ENCODE measurements at regions of chr7 and their contacts with region 1.

Region 1: GRCh38 chr7:836411-837400 is 4.4 kb downstream of the SUN1 start:
- DNase-seq: no peak
- ATAC-seq: peak; percentile 56
- H3K4me3 Mint-ChIP-seq: no peak overlapping the region
- H3K27ac Mint-ChIP-seq: peak overlapping the region; percentile 82
- H3K4me1 Mint-ChIP-seq: peaks cover 29% of the 10 kb centered on the region
- H3K27me3 Mint-ChIP-seq: no peaks in the 10 kb centered on the region
- CTCF ChIP-seq: no peak

Region 2: DNA sequence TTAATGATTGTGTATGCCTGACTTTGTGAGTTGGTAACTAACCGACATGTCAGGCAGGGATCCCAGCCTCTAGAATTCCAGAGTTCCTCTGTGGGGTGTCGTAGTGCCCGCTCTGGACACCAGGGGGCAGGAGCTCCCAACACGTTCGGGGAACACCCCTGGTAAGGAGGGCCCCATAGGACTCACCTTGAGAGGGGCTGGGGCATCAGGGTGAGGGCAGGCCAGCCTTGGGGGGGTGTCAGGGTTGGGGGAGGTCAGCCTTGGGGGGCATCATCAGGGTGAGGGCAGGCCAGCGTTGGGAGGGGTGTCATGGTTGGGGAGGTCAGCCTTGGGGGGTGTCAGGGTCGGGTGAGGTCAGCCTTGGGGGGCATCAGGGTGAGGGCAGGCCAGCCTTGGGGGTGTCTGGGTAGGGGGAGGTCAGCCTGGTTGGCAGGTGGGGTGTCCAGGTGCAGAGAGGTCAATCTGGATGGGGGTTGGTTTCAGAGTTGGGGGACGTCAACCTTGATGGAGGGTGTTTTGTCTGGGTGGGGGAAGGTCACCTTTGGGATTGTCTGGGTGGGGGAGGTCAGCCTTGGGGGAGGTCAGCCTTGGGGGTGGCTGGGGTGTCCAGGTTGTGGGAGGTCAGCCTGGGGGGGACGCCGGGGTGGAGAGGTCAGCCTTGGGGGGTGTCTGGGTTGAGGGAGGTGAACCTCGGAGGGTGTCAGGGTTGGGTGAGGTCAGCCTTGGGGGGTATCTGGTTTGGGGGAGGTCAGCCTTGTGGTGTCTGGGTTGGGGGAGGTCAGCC is 50.0 kb before region 1 on chr7:
- CTCF ChIA-PET with region 1: interaction called, 17 read pairs
- POLR2A ChIA-PET with region 1: no interaction called
- DNase-seq: peak; percentile 87
- ATAC-seq: peak; percentile 92
- H3K4me3 Mint-ChIP-seq: no peak overlapping the region
- H3K27ac Mint-ChIP-seq: no peak overlapping the region
- H3K4me1 Mint-ChIP-seq: no peaks in the 10 kb centered on the region
- H3K27me3 Mint-ChIP-seq: no peaks in the 10 kb centered on the region; the same call in 1 of the 2 replicates
- CTCF ChIP-seq: peak; percentile 86

Region 3: GRCh38 chr7:822692-823276 is 13.9 kb before region 1 on chr7:
- CTCF ChIA-PET with region 1: interaction called, 15 read pairs
- POLR2A ChIA-PET with region 1: no interaction called
- DNase-seq: peak; percentile 63
- ATAC-seq: peak; percentile 82
- H3K4me3 Mint-ChIP-seq: no peak overlapping the region
- H3K27ac Mint-ChIP-seq: peak overlapping the region; percentile 44
- H3K4me1 Mint-ChIP-seq: peaks cover 69% of the 10 kb centered on the region
- H3K27me3 Mint-ChIP-seq: no peaks in the 10 kb centered on the region
- CTCF ChIP-seq: peak; percentile 38; the same call in 1 of the 2 replicates